Mammary epithelial cell (primary cell): ENCODE measurements at regions of chr6 and their contacts with region 1.

Region 1: GRCh38 chr6:52284460-52285176 is at the start of gene MCM3:
- DNase-seq: peak; percentile 99
- H3K4me3 ChIP-seq: peak within 1 kb of the TSS; percentile 65 to 90 (median 86)
- H3K27ac ChIP-seq: peak within 1 kb of the TSS; percentile 69
- H3K4me1 ChIP-seq: peaks cover 12% of the 10 kb centered on the region
- H3K27me3 ChIP-seq: no peaks in the 10 kb centered on the region
- CTCF ChIP-seq: peak in 1 of 2 donors; percentile 9
- total RNA-seq, gene MCM3: 23.5 to 69.5 TPM

Region 2: DNA sequence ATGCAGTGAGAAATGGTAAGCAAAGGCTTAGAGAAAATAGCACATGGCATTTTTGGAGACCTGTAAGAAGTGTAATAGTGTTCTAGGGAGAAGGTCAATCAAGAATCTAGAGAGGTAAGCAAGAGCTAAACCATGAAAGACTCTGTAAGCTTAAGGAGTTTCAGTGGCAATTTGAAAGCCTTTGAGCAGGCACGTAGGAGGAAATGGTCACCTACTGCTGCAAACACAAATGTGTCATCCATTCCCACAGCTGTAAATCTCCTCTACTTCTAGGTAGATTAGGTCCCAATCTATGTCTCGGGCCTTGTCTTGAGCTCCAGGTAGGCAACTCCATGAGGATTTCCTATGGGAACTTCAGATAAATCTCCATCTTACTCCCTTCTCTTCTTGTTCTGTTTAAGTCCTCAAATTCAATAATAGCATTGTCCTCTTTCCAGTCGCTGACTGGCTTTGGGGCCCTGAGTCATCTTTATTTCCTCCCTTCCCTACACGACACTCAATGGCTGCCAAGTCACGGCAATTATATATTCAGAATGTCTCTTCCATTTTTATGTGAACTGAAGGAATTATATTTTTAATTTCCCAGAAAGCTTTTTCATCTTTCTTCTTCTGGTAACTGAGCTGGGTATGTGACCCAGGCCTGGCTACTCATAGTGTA is 53.1 kb after region 1 on chr6:
- CTCF ChIA-PET with region 1: no interaction called
- dilution Hi-C with region 1: loop called (anchors 5 kb)
- in situ Hi-C with region 1: no loop called
- intact Hi-C with region 1: no loop called
- DNase-seq: no peak
- H3K4me3 ChIP-seq: no peak overlapping the region
- H3K27ac ChIP-seq: no peak overlapping the region
- H3K4me1 ChIP-seq: peaks cover 4% of the 10 kb centered on the region
- H3K27me3 ChIP-seq: no peaks in the 10 kb centered on the region
- CTCF ChIP-seq: no peak

Region 3: GRCh38 chr6:52352239-52353008 is 67.8 kb after region 1 on chr6:
- CTCF ChIA-PET with region 1: no interaction called
- dilution Hi-C with region 1: no loop called
- in situ Hi-C with region 1: no loop called
- intact Hi-C with region 1: loop called (anchors 2 kb)
- DNase-seq: peak; percentile 96
- H3K4me3 ChIP-seq: no peak overlapping the region
- H3K27ac ChIP-seq: peak overlapping the region; percentile 86
- H3K4me1 ChIP-seq: peaks cover 19% of the 10 kb centered on the region
- H3K27me3 ChIP-seq: no peaks in the 10 kb centered on the region
- CTCF ChIP-seq: no peak

Region 4: DNA sequence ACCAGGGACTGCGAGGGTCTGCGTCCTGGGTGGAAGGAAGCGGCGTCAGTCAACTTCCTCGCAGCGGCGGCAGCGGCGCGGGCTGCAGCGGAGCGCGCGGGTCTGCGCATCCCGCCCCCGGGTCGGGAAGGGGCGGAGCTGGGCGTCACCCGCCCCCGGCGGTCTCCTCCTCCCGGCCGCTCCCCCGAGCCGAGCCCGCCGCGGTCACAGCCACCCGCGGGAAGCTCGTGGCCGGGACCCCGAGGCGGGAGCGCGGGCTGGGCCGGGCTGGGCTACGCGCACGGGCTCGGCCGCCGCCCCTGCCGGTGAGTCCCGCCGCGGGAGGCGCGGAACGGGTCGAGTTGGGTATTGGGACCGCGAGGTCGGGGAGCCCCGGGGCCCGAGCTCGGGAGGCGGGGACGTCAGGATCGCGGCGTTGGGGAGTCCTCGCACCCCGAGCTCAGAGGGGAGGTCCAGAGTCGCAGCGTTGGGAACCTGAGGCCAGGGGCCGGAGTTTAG is 77.4 kb after region 1 on chr6 and contains the start of gene PAQR8:
- CTCF ChIA-PET with region 1: no interaction called
- dilution Hi-C with region 1: no loop called
- in situ Hi-C with region 1: no loop called
- intact Hi-C with region 1: loop called (anchors 2 kb)
- DNase-seq: peak; percentile 36
- H3K4me3 ChIP-seq: peak within 1 kb of the TSS; percentile 59 to 72 (median 68)
- H3K27ac ChIP-seq: no peak within 1 kb of the TSS
- H3K4me1 ChIP-seq: peaks cover 14% of the 10 kb centered on the region
- H3K27me3 ChIP-seq: no peaks in the 10 kb centered on the region
- CTCF ChIP-seq: no peak
- total RNA-seq, gene PAQR8: 0.17 to 3.4 TPM

Region 5: GRCh38 chr6:52389626-52390360 is 105.2 kb after region 1 on chr6:
- CTCF ChIA-PET with region 1: no interaction called
- dilution Hi-C with region 1: loop called (anchors 5 kb)
- in situ Hi-C with region 1: no loop called
- intact Hi-C with region 1: no loop called
- DNase-seq: peak; percentile 72
- H3K4me3 ChIP-seq: no peak overlapping the region
- H3K27ac ChIP-seq: peak overlapping the region; percentile 26
- H3K4me1 ChIP-seq: peaks cover 14% of the 10 kb centered on the region
- H3K27me3 ChIP-seq: no peaks in the 10 kb centered on the region
- CTCF ChIP-seq: no peak

Region 6: GRCh38 chr6:52399511-52400312 is 115.1 kb after region 1 on chr6:
- CTCF ChIA-PET with region 1: interaction called, 3 read pairs
- dilution Hi-C with region 1: no loop called
- in situ Hi-C with region 1: no loop called
- intact Hi-C with region 1: loop called (anchors 1 kb)
- DNase-seq: peak; percentile 60
- H3K4me3 ChIP-seq: no peak overlapping the region
- H3K27ac ChIP-seq: no peak overlapping the region
- H3K4me1 ChIP-seq: peaks cover 8% of the 10 kb centered on the region
- H3K27me3 ChIP-seq: no peaks in the 10 kb centered on the region
- CTCF ChIP-seq: peak; percentile 89 to 91

Region 7: GRCh38 chr6:52598123-52598823 is 313.7 kb after region 1 on chr6:
- CTCF ChIA-PET with region 1: no interaction called
- dilution Hi-C with region 1: no loop called
- in situ Hi-C with region 1: no loop called
- intact Hi-C with region 1: loop called (anchors 10 kb)
- DNase-seq: no peak
- H3K4me3 ChIP-seq: no peak overlapping the region
- H3K27ac ChIP-seq: no peak overlapping the region
- H3K4me1 ChIP-seq: peaks cover 12% of the 10 kb centered on the region
- H3K27me3 ChIP-seq: no peaks in the 10 kb centered on the region
- CTCF ChIP-seq: peak; percentile 60 to 71